ENCODE measurements at regions of chr2 and their contacts with region 1.

Region 1: GRCh38 chr2:230847883-230848388 is 16.8 kb upstream of the ITM2C start:
- DNase-seq: peak; percentile 88
- ATAC-seq: peak; percentile 91
- H3K4me3 ChIP-seq: peak overlapping the region in 1 of 5 experiments; percentile 8
- H3K4me3 Mint-ChIP-seq: no peak overlapping the region
- H3K27ac ChIP-seq: no peak overlapping the region
- H3K27ac Mint-ChIP-seq: no peak overlapping the region
- H3K4me1 ChIP-seq: peaks cover 5 to 7% of the 10 kb centered on the region in 2 donors
- H3K4me1 Mint-ChIP-seq: peaks cover 6% of the 10 kb centered on the region
- H3K27me3 ChIP-seq: peaks cover 0 to 2% (median 0%) of the 10 kb centered on the region in 4 experiments
- H3K27me3 Mint-ChIP-seq: peaks cover 37% of the 10 kb centered on the region
- CTCF ChIP-seq: peak; percentile 95

Region 2: GRCh38 chr2:230864598-230865306 is 16.8 kb after region 1 on chr2 and contains the start of gene ITM2C:
- CTCF ChIA-PET with region 1: interaction called, 10 read pairs
- POLR2A ChIA-PET with region 1: no interaction called
- intact Hi-C with region 1: loop called (anchors 2 kb)
- DNase-seq: peak; percentile 82
- ATAC-seq: peak; percentile 80
- H3K4me3 ChIP-seq: peak within 1 kb of the TSS; percentile 41 to 83 (median 65)
- H3K4me3 Mint-ChIP-seq: peak within 1 kb of the TSS; percentile 90
- H3K27ac ChIP-seq: peak within 1 kb of the TSS; percentile 39 to 63
- H3K27ac Mint-ChIP-seq: peak within 1 kb of the TSS; percentile 78
- H3K4me1 ChIP-seq: peaks cover 46 to 59% of the 10 kb centered on the region in 2 donors
- H3K4me1 Mint-ChIP-seq: peaks cover 56% of the 10 kb centered on the region
- H3K27me3 ChIP-seq: no peaks in the 10 kb centered on the region
- H3K27me3 Mint-ChIP-seq: peaks cover 7% of the 10 kb centered on the region
- CTCF ChIP-seq: peak; percentile 76
- total RNA-seq, gene ITM2C: 36.9 and 37.4 TPM in 2 replicates

Region 3: GRCh38 chr2:230873476-230874451 is 25.8 kb after region 1 on chr2:
- CTCF ChIA-PET with region 1: interaction called, 11 read pairs
- POLR2A ChIA-PET with region 1: no interaction called
- intact Hi-C with region 1: no loop called
- DNase-seq: peak; percentile 88
- ATAC-seq: peak; percentile 77
- H3K4me3 ChIP-seq: peak overlapping the region in 4 of 5 experiments; percentile 33 to 57 (median 40)
- H3K4me3 Mint-ChIP-seq: peak overlapping the region; percentile 80
- H3K27ac ChIP-seq: peak overlapping the region; percentile 90 to 99
- H3K27ac Mint-ChIP-seq: peak overlapping the region; percentile 87
- H3K4me1 ChIP-seq: peaks cover 92 to 95% of the 10 kb centered on the region in 2 donors
- H3K4me1 Mint-ChIP-seq: peaks cover 72% of the 10 kb centered on the region
- H3K27me3 ChIP-seq: no peaks in the 10 kb centered on the region
- H3K27me3 Mint-ChIP-seq: no peaks in the 10 kb centered on the region
- CTCF ChIP-seq: no peak

Region 4: DNA sequence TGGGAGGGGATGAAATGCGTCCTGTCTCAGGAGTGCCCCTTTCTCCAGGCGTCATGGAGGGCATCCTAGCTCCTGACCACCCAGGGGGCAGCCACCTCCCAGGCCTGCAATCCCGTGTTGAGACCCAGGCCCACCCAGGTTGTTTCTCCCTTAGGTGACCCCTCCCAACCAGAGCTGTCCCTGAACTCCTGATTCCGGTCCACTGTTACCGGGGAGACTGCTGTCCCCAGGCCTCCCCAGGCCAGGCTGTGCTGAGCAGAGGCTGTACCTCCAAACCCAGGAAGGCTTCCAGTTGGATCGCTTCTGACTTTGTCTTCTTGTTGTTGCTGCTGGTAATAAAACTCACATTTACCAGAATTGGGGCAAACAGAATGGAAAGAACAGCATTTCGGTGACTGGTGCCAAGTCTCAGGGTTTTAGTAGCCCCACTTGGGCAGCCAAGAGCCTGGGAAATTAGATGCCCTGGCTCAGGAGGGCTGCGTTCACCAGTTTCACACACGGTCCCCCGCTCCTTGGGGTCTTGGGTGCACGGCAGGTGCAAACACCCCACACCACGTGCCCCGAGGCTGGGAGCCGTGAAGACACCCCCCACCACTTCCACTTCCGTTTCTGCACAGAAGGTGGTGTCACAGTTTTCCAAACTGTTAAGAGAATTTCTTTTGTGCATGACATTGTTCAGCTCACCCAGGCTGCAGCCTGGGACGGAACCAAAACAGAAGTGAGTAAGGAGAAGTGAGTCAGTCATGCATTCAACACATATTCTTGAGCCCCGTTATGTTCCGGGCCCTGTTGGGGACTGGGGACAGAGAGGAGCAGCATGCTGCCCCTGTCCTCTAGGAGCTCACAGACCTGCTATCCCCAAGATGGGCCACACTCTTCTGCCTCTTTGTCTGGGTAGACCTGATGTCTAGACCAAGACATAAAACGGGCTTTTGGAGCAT is 46.2 kb after region 1 on chr2:
- CTCF ChIA-PET with region 1: interaction called, 10 read pairs
- POLR2A ChIA-PET with region 1: no interaction called
- intact Hi-C with region 1: no loop called
- DNase-seq: peak; percentile 77
- ATAC-seq: peak; percentile 88
- H3K4me3 ChIP-seq: peak overlapping the region in 1 of 5 experiments; percentile 1
- H3K4me3 Mint-ChIP-seq: peak overlapping the region; percentile 30
- H3K27ac ChIP-seq: peak overlapping the region; percentile 53 to 70
- H3K27ac Mint-ChIP-seq: peak overlapping the region; percentile 48
- H3K4me1 ChIP-seq: peaks cover 44 to 66% of the 10 kb centered on the region in 2 donors
- H3K4me1 Mint-ChIP-seq: peaks cover 53% of the 10 kb centered on the region
- H3K27me3 ChIP-seq: no peaks in the 10 kb centered on the region
- H3K27me3 Mint-ChIP-seq: no peaks in the 10 kb centered on the region
- CTCF ChIP-seq: no peak

Region 5: GRCh38 chr2:230913406-230914143 is 65.6 kb after region 1 on chr2:
- CTCF ChIA-PET with region 1: interaction called, 91 read pairs
- POLR2A ChIA-PET with region 1: no interaction called
- intact Hi-C with region 1: loop called (anchors 1 kb)
- DNase-seq: peak; percentile 82
- ATAC-seq: peak; percentile 87
- H3K4me3 ChIP-seq: no peak overlapping the region
- H3K4me3 Mint-ChIP-seq: no peak overlapping the region
- H3K27ac ChIP-seq: no peak overlapping the region
- H3K27ac Mint-ChIP-seq: no peak overlapping the region
- H3K4me1 ChIP-seq: peaks cover 0 to 10% of the 10 kb centered on the region in 2 donors
- H3K4me1 Mint-ChIP-seq: peaks cover 16% of the 10 kb centered on the region
- H3K27me3 ChIP-seq: no peaks in the 10 kb centered on the region
- H3K27me3 Mint-ChIP-seq: no peaks in the 10 kb centered on the region
- CTCF ChIP-seq: peak; percentile 80